ENCODE measurements at regions of chr1 and their contacts with region 1.

Region 1: GRCh38 chr1:66294692-66295384 is 239.1 kb upstream of the SGIP1 start:
- DNase-seq: no peak
- ATAC-seq: no peak
- H3K4me3 ChIP-seq: no peak overlapping the region
- H3K4me3 Mint-ChIP-seq: no peak overlapping the region
- H3K27ac ChIP-seq: no peak overlapping the region
- H3K27ac Mint-ChIP-seq: peak overlapping the region in 1 of 9 donors; percentile 73
- H3K4me1 ChIP-seq: no peaks in the 10 kb centered on the region
- H3K4me1 Mint-ChIP-seq: peaks cover 4 to 34% (median 17%) of the 10 kb centered on the region in 7 donors
- H3K27me3 ChIP-seq: no peaks in the 10 kb centered on the region
- H3K27me3 Mint-ChIP-seq: peaks cover 0 to 3% (median 0%) of the 10 kb centered on the region in 5 donors

Region 2: GRCh38 chr1:66262211-66262963 is 32.5 kb before region 1 on chr1:
- CTCF ChIA-PET with region 1: no interaction called
- POLR2A ChIA-PET with region 1: no interaction called
- intact Hi-C with region 1: loop called in 1 of 2 experiments (anchors 1 kb)
- DNase-seq: no peak
- ATAC-seq: no peak
- H3K4me3 ChIP-seq: no peak overlapping the region
- H3K4me3 Mint-ChIP-seq: peak overlapping the region in 2 of 10 donors; percentile 60 to 73
- H3K27ac ChIP-seq: no peak overlapping the region
- H3K27ac Mint-ChIP-seq: peak overlapping the region in 2 of 9 donors; percentile 16 to 39
- H3K4me1 ChIP-seq: peaks cover 0 to 19% of the 10 kb centered on the region in 2 donors
- H3K4me1 Mint-ChIP-seq: peaks cover 15 to 69% (median 37%) of the 10 kb centered on the region in 7 donors
- H3K27me3 ChIP-seq: no peaks in the 10 kb centered on the region
- H3K27me3 Mint-ChIP-seq: no peaks in the 10 kb centered on the region

Region 3: DNA sequence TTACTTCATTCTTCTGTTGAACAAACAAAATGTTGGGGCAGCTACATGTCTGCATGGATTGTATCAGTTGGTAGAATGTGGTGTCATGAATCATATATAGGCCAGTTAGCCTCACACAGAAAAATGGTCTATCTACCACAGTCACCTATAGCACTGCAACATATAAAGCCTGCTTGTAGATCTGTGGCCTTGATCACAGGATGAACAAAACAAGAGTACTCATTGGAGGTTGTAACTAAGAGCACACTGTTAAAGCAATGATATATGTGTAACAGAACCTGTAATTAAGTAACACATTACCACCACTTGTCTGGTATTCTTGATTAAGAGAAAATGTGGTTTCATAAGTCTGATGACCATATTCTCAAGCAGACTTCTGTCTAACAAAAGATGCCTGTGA is 71.8 kb after region 1 on chr1:
- CTCF ChIA-PET with region 1: no interaction called
- POLR2A ChIA-PET with region 1: no interaction called
- intact Hi-C with region 1: no loop called
- DNase-seq: no peak
- ATAC-seq: peak; percentile 26
- H3K4me3 ChIP-seq: no peak overlapping the region
- H3K4me3 Mint-ChIP-seq: no peak overlapping the region
- H3K27ac ChIP-seq: no peak overlapping the region
- H3K27ac Mint-ChIP-seq: peak overlapping the region in 8 of 9 donors; percentile 3 to 76 (median 54)
- H3K4me1 ChIP-seq: peaks cover 28 to 29% of the 10 kb centered on the region in 2 donors
- H3K4me1 Mint-ChIP-seq: peaks cover 31 to 74% (median 64%) of the 10 kb centered on the region in 7 donors
- H3K27me3 ChIP-seq: no peaks in the 10 kb centered on the region
- H3K27me3 Mint-ChIP-seq: no peaks in the 10 kb centered on the region

Measured in naive thymus-derived CD4-positive, alpha-beta T cell (primary cell).